ENCODE measurements at regions of chr17 and their contacts with region 1.

Region 1: DNA sequence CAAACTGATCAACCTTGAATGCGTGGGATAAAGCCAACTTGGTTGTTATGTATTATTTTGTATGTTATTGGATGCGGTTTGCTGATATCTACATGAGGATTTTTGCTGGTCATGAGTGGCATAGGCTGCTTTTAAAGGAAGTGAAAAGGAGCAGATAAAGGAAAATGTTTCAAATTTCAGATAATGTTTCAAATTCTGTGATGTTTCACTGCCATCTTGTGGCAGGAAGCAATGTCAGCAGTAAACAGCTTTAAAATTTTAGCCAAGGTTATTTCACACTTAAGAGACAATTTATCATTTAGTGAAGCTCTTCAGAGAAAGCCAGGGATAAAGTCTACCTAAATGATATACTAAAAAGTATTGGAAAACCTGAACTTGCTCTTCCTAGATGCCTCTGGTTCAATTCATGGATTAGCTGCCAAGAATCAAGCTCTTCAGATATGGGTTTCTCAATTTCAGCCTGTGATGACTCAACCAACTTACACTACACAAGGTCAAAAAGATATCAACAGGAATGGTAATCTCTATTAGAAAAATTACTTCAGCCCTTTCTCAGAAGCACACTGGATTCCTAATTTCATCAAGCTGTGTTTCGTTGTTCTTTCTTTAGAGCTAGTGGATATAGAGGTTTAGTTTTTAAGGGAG is 136.0 kb upstream of the C17orf78 start:
- DNase-seq: no peak
- H3K4me3 ChIP-seq: no peak overlapping the region
- CTCF ChIP-seq: peak; percentile 58

Region 2: GRCh38 chr17:36608794-36609497 is 630.9 kb before region 1 on chr17:
- CTCF ChIA-PET with region 1: interaction called, 82 read pairs
- POLR2A ChIA-PET with region 1: no interaction called
- DNase-seq: no peak
- H3K4me3 ChIP-seq: no peak overlapping the region
- CTCF ChIP-seq: peak; percentile 76

Region 3: GRCh38 chr17:37206299-37206698 is 33.5 kb before region 1 on chr17:
- CTCF ChIA-PET with region 1: interaction called, 14 read pairs
- POLR2A ChIA-PET with region 1: no interaction called
- DNase-seq: no peak
- H3K4me3 ChIP-seq: no peak overlapping the region
- CTCF ChIP-seq: no peak

Region 4: DNA sequence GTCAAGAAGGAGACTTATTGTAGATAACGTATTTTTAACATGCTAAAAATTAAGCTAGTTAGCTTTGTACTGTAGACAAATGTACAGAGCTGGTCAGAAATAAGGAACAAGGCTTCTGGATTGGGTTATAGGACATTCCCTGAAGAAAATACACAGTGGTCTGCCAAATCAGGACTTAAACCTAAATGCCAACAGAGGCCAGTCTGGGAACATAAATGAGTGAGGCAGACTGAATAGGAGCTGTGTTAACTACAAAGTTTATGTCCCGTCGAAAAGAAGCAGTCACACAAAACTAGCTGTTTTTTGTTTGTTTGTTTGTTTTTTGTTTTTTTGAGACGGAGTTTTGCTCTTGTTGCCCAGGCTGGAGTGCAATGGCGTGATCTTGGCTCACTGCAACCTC is 15.6 kb after region 1 on chr17:
- CTCF ChIA-PET with region 1: interaction called, 25 read pairs
- POLR2A ChIA-PET with region 1: no interaction called
- DNase-seq: no peak
- H3K4me3 ChIP-seq: no peak overlapping the region
- CTCF ChIP-seq: no peak

Region 5: GRCh38 chr17:37506678-37507077 is 266.9 kb after region 1 on chr17:
- CTCF ChIA-PET with region 1: no interaction called
- POLR2A ChIA-PET with region 1: no interaction called
- DNase-seq: no peak
- H3K4me3 ChIP-seq: no peak overlapping the region
- CTCF ChIP-seq: peak; percentile 56